ENCODE measurements at regions of chr1 and their contacts with region 1.

Region 1: DNA sequence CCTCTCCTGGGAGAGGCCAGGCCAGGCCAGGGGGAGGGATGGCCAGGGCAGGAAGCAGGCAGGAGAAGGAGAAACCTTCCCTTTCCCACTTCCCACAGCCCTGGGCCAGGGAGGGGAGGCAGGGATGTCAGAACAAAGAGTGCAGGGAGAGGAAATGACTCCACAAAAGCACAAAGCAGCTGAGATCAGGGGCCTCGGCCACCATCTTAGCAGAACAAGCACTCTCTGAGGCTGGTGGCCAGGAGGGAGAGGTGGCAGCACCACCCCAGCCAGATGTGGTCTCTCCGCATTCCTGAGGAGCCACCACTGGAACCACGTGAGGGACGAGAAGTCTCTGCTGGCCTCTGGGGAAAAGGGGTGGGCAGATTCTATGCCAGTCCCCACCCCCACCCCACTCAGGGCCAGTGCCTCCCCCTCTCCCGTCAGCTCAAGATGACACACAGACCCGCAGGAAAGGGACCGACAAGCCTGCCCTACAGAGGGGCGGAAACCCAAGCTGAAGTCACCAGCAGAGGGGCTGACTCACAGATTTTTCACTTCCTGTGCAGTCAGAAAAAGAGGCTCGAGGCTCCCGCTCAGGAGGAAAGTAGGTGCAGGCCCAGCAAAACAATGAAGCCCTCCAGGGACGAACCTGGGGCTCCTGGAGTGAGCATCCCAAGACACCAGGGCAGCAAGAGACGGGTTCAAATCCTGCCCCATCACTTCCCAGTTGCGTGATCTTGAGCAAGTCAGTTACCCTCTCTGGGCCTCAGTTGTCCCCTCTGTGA is 24.1 kb upstream of the ALDH4A1 start:
- DNase-seq: peak; percentile 94
- ATAC-seq: peak; percentile 87
- H3K4me3 Mint-ChIP-seq: peak overlapping the region; percentile 83
- H3K27ac Mint-ChIP-seq: peak overlapping the region; percentile 98
- H3K4me1 Mint-ChIP-seq: peaks cover 67% of the 10 kb centered on the region
- H3K27me3 Mint-ChIP-seq: no peaks in the 10 kb centered on the region

Region 2: GRCh38 chr1:18949686-18950400 is 23.3 kb after region 1 on chr1:
- CTCF ChIA-PET with region 1: interaction called, 116 read pairs
- POLR2A ChIA-PET with region 1: interaction called, 118 read pairs
- DNase-seq: peak; percentile 41
- ATAC-seq: no peak
- H3K4me3 Mint-ChIP-seq: peak overlapping the region; percentile 71
- H3K27ac Mint-ChIP-seq: peak overlapping the region; percentile 94
- H3K4me1 Mint-ChIP-seq: peaks cover 86% of the 10 kb centered on the region
- H3K27me3 Mint-ChIP-seq: peaks cover 17% of the 10 kb centered on the region

Region 3: DNA sequence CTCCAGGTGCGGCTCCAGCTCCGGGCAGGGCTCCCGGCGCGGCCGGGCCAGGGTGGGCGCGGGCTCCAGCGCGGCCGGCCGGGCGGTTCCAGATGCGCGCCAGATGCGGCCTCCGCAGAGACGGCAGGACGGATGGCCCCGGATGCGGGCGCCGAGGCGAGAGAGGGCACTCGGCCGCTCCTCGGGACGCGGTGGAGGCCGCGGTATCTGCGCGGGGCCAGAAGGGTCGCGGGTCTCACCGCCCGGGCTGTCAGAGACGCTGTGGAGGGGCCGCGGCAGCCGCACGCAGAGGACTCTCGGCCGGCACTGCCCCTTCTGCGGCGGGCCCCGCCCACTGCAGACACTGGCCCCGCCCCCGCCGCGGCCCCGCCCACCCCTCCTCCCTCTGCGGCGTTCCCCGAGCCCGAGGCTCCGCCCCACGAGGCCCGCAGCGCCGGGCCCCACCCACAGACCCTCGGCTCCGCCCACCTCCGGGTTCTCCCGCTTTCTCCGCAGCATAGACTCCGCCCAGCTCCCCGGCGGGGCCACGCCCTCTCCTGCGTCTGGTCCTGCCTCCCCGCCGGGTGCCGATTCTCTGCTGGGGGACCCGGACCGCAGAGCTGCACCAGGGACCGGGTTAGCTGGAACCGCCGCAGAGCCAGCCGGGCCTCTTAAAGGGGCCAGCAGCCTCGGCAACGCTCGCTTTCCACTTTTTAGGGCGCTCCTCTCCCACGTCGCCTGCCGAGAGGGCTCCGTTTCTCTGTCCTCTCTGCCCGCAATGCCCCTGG is 30.1 kb after region 1 on chr1 and contains the start of gene IFFO2:
- CTCF ChIA-PET with region 1: interaction called, 116 read pairs
- POLR2A ChIA-PET with region 1: interaction called, 118 read pairs
- DNase-seq: peak; percentile 97
- ATAC-seq: peak; percentile 74
- H3K4me3 Mint-ChIP-seq: peak within 1 kb of the TSS; percentile 77
- H3K27ac Mint-ChIP-seq: peak within 1 kb of the TSS; percentile 72
- H3K4me1 Mint-ChIP-seq: peaks cover 59% of the 10 kb centered on the region
- H3K27me3 Mint-ChIP-seq: peaks cover 45% of the 10 kb centered on the region
- total RNA-seq, gene IFFO2: 7.2 to 8.2 TPM

Region 4: GRCh38 chr1:19010995-19011844 is 84.7 kb after region 1 on chr1:
- CTCF ChIA-PET with region 1: interaction called, 4 read pairs
- POLR2A ChIA-PET with region 1: interaction called, 11 read pairs
- DNase-seq: peak; percentile 87
- ATAC-seq: peak; percentile 98
- H3K4me3 Mint-ChIP-seq: no peak overlapping the region
- H3K27ac Mint-ChIP-seq: peak overlapping the region; percentile 44
- H3K4me1 Mint-ChIP-seq: peaks cover 28% of the 10 kb centered on the region
- H3K27me3 Mint-ChIP-seq: peaks cover 4% of the 10 kb centered on the region

Region 5: GRCh38 chr1:19074902-19075721 is 148.6 kb after region 1 on chr1:
- CTCF ChIA-PET with region 1: interaction called, 14 read pairs
- POLR2A ChIA-PET with region 1: interaction called, 6 read pairs
- DNase-seq: no peak
- ATAC-seq: no peak
- H3K4me3 Mint-ChIP-seq: no peak overlapping the region
- H3K27ac Mint-ChIP-seq: peak overlapping the region; percentile 78
- H3K4me1 Mint-ChIP-seq: peaks cover 34% of the 10 kb centered on the region
- H3K27me3 Mint-ChIP-seq: peaks cover 6% of the 10 kb centered on the region